Ovary (tissue), 10 donors: ENCODE measurements at regions of chr6 and their contacts with region 1.

Region 1: GRCh38 chr6:42179945-42180313 is 6.8 kb downstream of the GUCA1A start:
- DNase-seq: no peak
- H3K4me3 ChIP-seq: no peak overlapping the region
- H3K27ac ChIP-seq: no peak overlapping the region
- H3K4me1 ChIP-seq: no peaks in the 10 kb centered on the region
- H3K27me3 ChIP-seq: no peaks in the 10 kb centered on the region
- CTCF ChIP-seq: no peak
- EP300 ChIP-seq: no peak
- POLR2A ChIP-seq: no peak

Region 2: GRCh38 chr6:42230345-42231321 is 50.7 kb after region 1 on chr6:
- intact Hi-C with region 1: no loop called
- DNase-seq: peak in 3 of 5 donors; percentile 36 to 55 (median 54)
- H3K4me3 ChIP-seq: no peak overlapping the region
- H3K27ac ChIP-seq: no peak overlapping the region
- H3K4me1 ChIP-seq: peaks cover 7% of the 10 kb centered on the region
- H3K27me3 ChIP-seq: no peaks in the 10 kb centered on the region
- CTCF ChIP-seq: no peak
- EP300 ChIP-seq: no peak
- POLR2A ChIP-seq: no peak

Region 3: DNA sequence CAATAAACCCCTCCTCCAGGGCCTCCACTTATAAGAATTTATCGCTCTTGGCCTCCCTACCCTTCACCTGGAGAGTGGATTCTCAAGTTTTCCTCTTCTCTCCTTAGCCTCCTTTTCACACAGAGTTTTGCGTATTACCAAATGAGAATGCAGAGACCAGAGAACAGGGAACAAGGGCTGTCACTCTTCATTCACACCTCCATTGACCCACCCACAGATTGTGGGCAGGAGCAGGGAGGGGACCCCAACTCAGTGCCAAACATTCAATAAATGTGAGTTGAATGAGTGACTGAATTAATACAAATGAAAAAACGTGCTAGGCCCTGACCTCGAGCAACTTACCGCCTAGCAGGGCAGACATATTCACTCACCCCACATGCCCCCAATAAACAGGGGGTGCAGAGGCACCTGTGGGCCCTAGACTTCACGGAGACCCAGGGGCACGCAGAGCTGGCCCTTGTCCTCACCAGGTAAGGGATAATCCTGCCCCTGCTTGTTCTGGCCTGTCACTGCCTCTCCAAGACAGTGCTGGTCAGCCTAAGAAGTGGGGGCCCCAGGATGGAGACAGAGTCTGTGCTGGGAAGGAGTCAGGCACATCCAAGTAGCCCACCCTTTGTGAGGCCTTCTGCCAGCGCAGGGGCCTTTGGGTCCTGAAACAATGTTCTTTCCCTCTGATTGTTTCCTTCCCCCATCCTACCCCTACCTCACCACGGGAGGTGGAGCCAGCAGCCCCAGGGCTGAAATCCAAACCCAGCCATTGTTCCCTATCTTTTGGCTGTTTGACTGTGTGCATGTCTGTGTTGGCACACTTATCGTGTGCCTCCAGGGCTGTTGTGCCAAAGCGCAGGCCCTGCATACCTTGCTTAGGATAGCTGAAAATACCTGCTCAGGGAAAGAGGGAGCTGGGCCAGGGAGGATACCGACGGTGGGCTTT is 1289.1 kb after region 1 on chr6:
- intact Hi-C with region 1: loop called in 1 of 4 experiments (anchors 5 kb)
- DNase-seq: no peak
- H3K4me3 ChIP-seq: no peak overlapping the region
- H3K27ac ChIP-seq: no peak overlapping the region
- H3K4me1 ChIP-seq: no peaks in the 10 kb centered on the region
- H3K27me3 ChIP-seq: no peaks in the 10 kb centered on the region
- CTCF ChIP-seq: no peak
- EP300 ChIP-seq: no peak
- POLR2A ChIP-seq: no peak